ENCODE measurements at regions of chr12 and their contacts with region 1.

Region 1: GRCh38 chr12:10140001-10140400 is 10.0 kb upstream of the CLEC7A start:
- DNase-seq: peak; percentile 68
- H3K4me3 Mint-ChIP-seq: no peak overlapping the region
- H3K27ac Mint-ChIP-seq: no peak overlapping the region
- H3K4me1 Mint-ChIP-seq: no peaks in the 10 kb centered on the region
- H3K27me3 Mint-ChIP-seq: peaks cover 27% of the 10 kb centered on the region

Region 2: DNA sequence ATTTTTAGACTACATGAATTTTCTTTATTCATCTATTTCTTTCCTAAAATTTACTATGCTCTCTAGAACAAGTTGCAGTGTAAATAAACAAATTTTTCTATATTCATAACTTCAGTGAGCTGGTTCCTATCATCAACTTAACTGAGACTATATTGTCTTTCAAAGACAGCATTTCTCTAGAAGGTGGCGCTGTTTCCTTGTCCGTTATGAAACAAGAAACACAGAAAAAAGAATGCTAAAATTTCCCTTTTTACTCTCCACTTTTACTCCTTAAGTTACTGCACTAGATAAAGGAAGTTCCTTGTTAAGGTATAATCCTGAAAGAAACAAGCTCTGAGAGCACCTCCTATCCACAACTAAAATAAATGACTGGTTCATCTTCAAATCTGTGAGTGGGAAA is 199.6 kb before region 1 on chr12:
- CTCF ChIA-PET with region 1: interaction called, 15 read pairs
- DNase-seq: no peak
- H3K4me3 Mint-ChIP-seq: no peak overlapping the region
- H3K27ac Mint-ChIP-seq: no peak overlapping the region
- H3K4me1 Mint-ChIP-seq: peaks cover 26% of the 10 kb centered on the region
- H3K27me3 Mint-ChIP-seq: peaks cover 11% of the 10 kb centered on the region

Region 3: GRCh38 chr12:10012630-10013330 is 127.2 kb before region 1 on chr12:
- CTCF ChIA-PET with region 1: interaction called, 21 read pairs
- DNase-seq: no peak
- H3K4me3 Mint-ChIP-seq: no peak overlapping the region
- H3K27ac Mint-ChIP-seq: no peak overlapping the region
- H3K4me1 Mint-ChIP-seq: no peaks in the 10 kb centered on the region
- H3K27me3 Mint-ChIP-seq: peaks cover 15% of the 10 kb centered on the region

Region 4: DNA sequence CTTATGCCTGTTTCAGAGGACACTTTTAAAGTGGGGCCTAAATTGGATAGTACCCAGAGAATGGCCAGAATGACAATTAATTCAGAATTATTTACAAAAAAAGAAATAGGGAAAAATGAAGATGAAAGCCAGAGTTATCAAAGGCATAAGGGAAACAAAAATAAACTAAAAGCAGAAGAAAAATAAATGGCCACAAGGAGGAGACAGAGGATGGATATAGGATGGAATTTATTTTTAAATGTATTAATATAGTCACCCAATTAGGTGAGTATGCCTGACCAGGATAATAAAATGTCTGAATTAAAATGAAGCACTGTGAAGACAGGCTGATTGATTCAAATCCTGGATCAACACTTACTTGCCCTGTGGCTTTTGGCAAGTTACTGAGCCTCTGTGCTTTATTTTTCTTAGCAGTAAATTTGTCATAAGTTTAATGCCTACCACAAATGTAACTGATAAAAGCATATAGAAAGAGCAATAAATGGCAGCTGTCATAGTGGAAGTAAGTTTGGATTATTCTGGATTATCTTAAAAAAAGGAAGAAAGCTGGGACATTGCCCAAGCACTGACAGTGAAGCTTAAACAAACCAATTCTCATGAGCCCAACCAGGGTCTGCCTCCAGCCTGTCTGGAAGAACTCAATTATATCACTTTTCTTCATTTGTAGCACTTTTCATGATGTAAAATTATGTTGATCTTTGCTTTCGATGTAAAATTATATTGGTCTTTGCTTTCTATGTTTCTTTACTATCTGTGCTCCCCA is 106.0 kb before region 1 on chr12:
- CTCF ChIA-PET with region 1: interaction called, 16 read pairs
- DNase-seq: no peak
- H3K4me3 Mint-ChIP-seq: no peak overlapping the region
- H3K27ac Mint-ChIP-seq: no peak overlapping the region
- H3K4me1 Mint-ChIP-seq: no peaks in the 10 kb centered on the region
- H3K27me3 Mint-ChIP-seq: peaks cover 7% of the 10 kb centered on the region

Region 5: DNA sequence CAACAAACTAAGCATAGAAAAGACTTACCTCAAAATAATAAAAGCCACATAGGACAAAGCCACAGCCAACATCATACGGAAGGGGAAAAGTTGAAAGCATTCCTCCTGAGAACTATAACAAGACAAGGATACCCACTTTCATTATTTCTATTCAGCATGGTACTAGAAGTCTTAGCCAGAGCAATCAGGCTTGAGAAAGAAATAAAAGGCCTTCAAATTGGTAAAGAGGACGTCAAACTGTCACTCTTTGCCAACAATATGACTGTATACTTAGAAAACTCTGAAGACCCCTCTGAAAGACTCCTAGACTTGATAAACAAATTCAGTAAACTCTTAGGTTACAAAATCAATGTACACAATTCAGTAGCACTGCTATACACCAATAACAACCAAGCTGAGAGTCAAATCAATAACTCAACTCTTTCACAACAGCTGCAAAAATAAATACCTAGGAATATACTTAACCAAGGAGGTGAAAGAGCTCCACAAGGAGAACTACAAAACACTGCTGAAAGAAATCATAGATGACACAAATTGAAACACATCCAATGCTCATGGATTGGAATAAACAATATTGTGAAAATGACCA is 29.7 kb before region 1 on chr12:
- CTCF ChIA-PET with region 1: no interaction called
- DNase-seq: no peak
- H3K4me3 Mint-ChIP-seq: no peak overlapping the region
- H3K27ac Mint-ChIP-seq: no peak overlapping the region
- H3K4me1 Mint-ChIP-seq: no peaks in the 10 kb centered on the region
- H3K27me3 Mint-ChIP-seq: peaks cover 13% of the 10 kb centered on the region

Region 6: DNA sequence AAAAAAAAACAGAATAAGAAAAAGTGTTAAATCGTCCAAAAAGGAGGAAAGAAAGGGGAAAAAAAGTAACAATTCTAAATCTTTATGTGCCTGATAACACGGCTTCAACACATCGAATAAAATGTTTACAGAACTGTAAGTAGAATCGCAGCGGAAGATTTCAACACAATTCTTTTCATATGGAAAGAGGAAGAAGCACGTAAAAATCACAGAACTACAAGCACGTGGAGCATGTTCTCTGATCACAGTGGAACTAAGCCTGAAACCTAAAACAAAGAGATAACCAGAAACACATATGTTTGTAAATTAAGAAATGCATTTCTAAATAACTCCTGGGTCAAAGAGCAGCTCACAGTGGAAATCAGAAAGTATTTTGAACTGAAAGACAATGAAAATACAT is 18.7 kb before region 1 on chr12:
- CTCF ChIA-PET with region 1: no interaction called
- DNase-seq: no peak
- H3K4me3 Mint-ChIP-seq: no peak overlapping the region
- H3K27ac Mint-ChIP-seq: no peak overlapping the region
- H3K4me1 Mint-ChIP-seq: no peaks in the 10 kb centered on the region
- H3K27me3 Mint-ChIP-seq: no peaks in the 10 kb centered on the region

Region 7: GRCh38 chr12:10205251-10205807 is 65.3 kb after region 1 on chr12:
- CTCF ChIA-PET with region 1: no interaction called
- DNase-seq: no peak
- H3K4me3 Mint-ChIP-seq: no peak overlapping the region
- H3K27ac Mint-ChIP-seq: no peak overlapping the region
- H3K4me1 Mint-ChIP-seq: no peaks in the 10 kb centered on the region
- H3K27me3 Mint-ChIP-seq: peaks cover 25% of the 10 kb centered on the region

Region 8: DNA sequence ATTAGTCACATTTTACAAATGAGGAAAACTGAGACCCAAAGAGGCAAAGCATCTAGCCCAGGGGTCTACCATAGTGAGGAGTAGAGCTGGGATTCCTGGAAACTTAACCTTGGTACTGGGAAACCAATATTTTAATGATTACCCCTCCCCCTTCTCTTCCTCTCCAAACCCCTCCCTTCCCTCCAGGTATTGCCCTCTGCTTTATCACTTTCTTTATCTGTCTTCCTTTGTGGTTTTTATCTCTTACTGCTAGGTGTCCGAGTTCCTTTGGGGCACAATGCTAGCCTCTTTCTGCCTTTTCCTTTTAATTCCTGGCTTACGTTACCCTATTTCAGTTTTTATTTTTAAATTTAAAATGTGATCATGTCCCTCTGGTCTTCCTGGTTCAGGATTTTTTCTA is 75.5 kb after region 1 on chr12:
- CTCF ChIA-PET with region 1: no interaction called
- DNase-seq: no peak
- H3K4me3 Mint-ChIP-seq: no peak overlapping the region
- H3K27ac Mint-ChIP-seq: no peak overlapping the region
- H3K4me1 Mint-ChIP-seq: peaks cover 37% of the 10 kb centered on the region
- H3K27me3 Mint-ChIP-seq: peaks cover 11% of the 10 kb centered on the region

Measured in activated naive CD4-positive, alpha-beta T cell treated with anti-CD3 and anti-CD28 coated beads, Interleukin-2, amount 10 ng/mL, durations not matched to agents 7 days and 5 days (primary cell).